ENCODE measurements at regions of chr12 and their contacts with region 1.

Region 1: GRCh38 chr12:14257734-14258574 is 107.5 kb upstream of the ATF7IP start:
- DNase-seq: peak in 1 of 2 donors; percentile 98
- ATAC-seq: peak in 7 of 8 donors; percentile 83 to 92 (median 89)
- H3K4me3 ChIP-seq: peak overlapping the region in 7 of 10 donors; percentile 6 to 30 (median 22)
- H3K27ac ChIP-seq: peak overlapping the region; percentile 83 to 96 (median 92)
- H3K4me1 ChIP-seq: peaks cover 13 to 76% (median 52%) of the 10 kb centered on the region in 9 donors
- H3K27me3 ChIP-seq: no peaks in the 10 kb centered on the region
- CTCF ChIP-seq: no peak

Region 2: DNA sequence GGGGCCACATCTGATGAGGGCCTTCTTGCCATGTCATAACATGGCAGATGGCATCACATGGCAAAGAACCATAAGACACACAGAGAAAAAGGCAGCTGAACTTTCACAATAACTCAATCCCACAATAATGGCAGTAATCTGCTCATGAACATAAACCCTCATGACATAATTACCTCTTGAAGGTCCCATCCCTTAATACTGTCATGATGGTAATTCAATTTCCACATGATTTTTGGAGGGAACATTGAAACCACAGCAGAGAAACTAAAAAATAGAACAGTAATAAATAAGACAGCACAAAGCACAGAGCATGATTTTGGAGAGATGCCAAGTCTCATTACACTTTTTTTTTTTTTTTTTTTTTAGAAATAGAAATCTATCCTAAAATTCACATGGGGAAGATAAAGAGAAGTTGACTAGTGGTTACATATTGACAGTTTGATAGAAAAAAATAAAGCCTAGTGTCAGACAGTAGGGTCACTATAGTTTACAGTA is 45.8 kb after region 1 on chr12:
- intact Hi-C with region 1: no loop called
- DNase-seq: no peak
- ATAC-seq: no peak
- H3K4me3 ChIP-seq: no peak overlapping the region
- H3K27ac ChIP-seq: no peak overlapping the region
- H3K4me1 ChIP-seq: peaks cover 0 to 3% (median 0%) of the 10 kb centered on the region in 9 donors
- H3K27me3 ChIP-seq: no peaks in the 10 kb centered on the region
- CTCF ChIP-seq: no peak

Region 3: GRCh38 chr12:14365294-14366208 is 107.6 kb after region 1 on chr12 and contains the start of gene ATF7IP:
- intact Hi-C with region 1: loop called in 9 of 10 experiments (anchors 1 to 5 kb)
- DNase-seq: peak; percentile 94 to 97
- ATAC-seq: peak; percentile 97 to 99 (median 98)
- H3K4me3 ChIP-seq: peak within 1 kb of the TSS; percentile 26 to 83 (median 72)
- H3K27ac ChIP-seq: peak within 1 kb of the TSS; percentile 82 to 99 (median 96)
- H3K4me1 ChIP-seq: peaks cover 0 to 24% (median 8%) of the 10 kb centered on the region in 9 donors
- H3K27me3 ChIP-seq: no peaks in the 10 kb centered on the region
- CTCF ChIP-seq: peak in 4 of 9 donors; percentile 36 to 61 (median 56)
- total RNA-seq, gene ATF7IP: 37.9 to 85.8 (median 67.3) TPM

Region 4: DNA sequence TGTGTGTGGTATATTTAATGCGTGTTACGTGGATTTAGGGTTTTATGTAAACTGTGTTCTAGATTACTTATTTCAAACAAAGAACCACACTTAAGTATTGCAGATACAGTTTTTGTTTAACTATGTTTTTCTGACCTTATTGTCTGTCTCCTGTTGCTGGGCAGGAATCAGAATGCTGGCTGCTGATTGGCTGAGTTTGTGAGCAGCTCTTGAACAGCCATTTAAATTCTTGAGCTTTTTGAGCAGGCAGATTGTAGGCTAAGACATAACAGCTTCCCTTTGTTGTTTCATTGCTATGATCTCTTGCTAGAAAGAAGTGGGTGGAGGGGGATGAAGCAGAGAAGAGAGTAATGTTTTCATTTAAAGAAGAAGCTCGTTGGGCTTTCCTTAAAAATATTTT is 159.8 kb after region 1 on chr12:
- intact Hi-C with region 1: loop called in 6 of 10 experiments (anchors 1 to 10 kb)
- DNase-seq: peak; percentile 29 to 79
- ATAC-seq: peak in 7 of 8 donors; percentile 78 to 91 (median 87)
- H3K4me3 ChIP-seq: peak overlapping the region in 6 of 10 donors; percentile 6 to 31 (median 16)
- H3K27ac ChIP-seq: peak overlapping the region in 7 of 10 donors; percentile 4 to 68 (median 48)
- H3K4me1 ChIP-seq: peaks cover 0 to 90% (median 66%) of the 10 kb centered on the region in 9 donors
- H3K27me3 ChIP-seq: no peaks in the 10 kb centered on the region
- CTCF ChIP-seq: no peak

Region 5: DNA sequence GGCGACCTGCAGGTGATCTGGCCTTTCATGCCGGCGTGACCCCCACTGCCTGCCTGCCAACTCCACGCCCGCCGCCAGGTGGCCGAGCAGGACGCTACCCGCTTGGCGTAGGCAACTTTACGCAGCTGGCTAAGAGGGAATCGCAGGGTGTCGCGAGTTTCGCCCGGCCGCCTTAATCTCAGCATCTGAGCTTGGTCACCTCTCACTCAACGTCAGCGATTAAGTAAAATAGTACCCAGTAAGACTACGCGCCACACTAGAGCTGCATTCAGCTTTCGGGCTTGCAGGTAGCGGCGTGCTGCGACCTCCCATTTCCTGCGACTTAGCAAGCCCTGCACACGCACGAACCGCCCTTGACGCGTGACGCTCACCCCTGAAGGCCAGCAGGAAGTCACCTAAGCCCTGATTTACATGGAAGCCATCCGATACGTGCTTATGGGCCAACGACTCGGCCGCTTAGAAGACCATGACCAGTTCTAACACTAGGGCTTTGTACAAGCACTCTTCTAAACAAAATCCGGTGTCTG is 512.1 kb after region 1 on chr12:
- intact Hi-C with region 1: loop called in 1 of 10 experiments (anchors 5 kb)
- DNase-seq: peak; percentile 80 to 82
- ATAC-seq: peak; percentile 41 to 81 (median 69)
- H3K4me3 ChIP-seq: peak overlapping the region; percentile 51 to 94 (median 73)
- H3K27ac ChIP-seq: peak overlapping the region; percentile 88 to 98 (median 94)
- H3K4me1 ChIP-seq: peaks cover 4 to 52% (median 25%) of the 10 kb centered on the region in 9 donors
- H3K27me3 ChIP-seq: no peaks in the 10 kb centered on the region
- CTCF ChIP-seq: peak; percentile 64 to 78 (median 75)